Activated CD4-positive, alpha-beta memory T cell treated with anti-CD3 and anti-CD28 coated beads for 36 hours (primary cell): ENCODE measurements at regions of chr17 and their contacts with region 1.

Region 1: GRCh38 chr17:40113110-40113906 is 8.5 kb upstream of the MSL1 start:
- DNase-seq: peak; percentile 96
- H3K4me3 Mint-ChIP-seq: peak overlapping the region; percentile 80
- H3K27ac Mint-ChIP-seq: peak overlapping the region; percentile 92
- H3K4me1 Mint-ChIP-seq: peaks cover 49% of the 10 kb centered on the region
- H3K27me3 Mint-ChIP-seq: no peaks in the 10 kb centered on the region

Region 2: DNA sequence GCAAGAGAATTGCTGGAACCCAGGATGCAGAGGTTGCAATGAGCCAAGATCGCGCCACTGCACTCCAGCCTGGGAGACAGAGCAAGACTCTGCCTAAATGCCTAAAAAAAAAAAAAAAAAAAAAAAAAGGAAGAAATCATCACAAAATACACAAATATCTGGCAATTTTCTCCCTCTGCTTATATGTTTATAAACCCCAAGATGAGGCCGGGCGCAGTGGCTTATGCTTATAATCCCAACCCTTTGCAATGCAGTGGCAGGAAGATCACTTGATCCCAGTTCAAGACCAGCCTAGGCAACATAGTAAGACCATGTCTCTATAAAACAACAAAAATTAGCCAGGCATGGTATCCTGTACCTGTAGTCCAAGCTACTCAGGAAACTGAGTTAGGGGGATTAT is 683.7 kb before region 1 on chr17:
- CTCF ChIA-PET with region 1: no interaction called
- POLR2A ChIA-PET with region 1: no interaction called
- intact Hi-C with region 1: no loop called
- DNase-seq: no peak
- H3K4me3 Mint-ChIP-seq: no peak overlapping the region
- H3K27ac Mint-ChIP-seq: no peak overlapping the region
- H3K4me1 Mint-ChIP-seq: no peaks in the 10 kb centered on the region
- H3K27me3 Mint-ChIP-seq: no peaks in the 10 kb centered on the region

Region 3: GRCh38 chr17:40019140-40019991 is 93.9 kb before region 1 on chr17:
- CTCF ChIA-PET with region 1: interaction called, 41 read pairs
- POLR2A ChIA-PET with region 1: no interaction called
- intact Hi-C with region 1: no loop called
- DNase-seq: no peak
- H3K4me3 Mint-ChIP-seq: no peak overlapping the region
- H3K27ac Mint-ChIP-seq: no peak overlapping the region
- H3K4me1 Mint-ChIP-seq: no peaks in the 10 kb centered on the region
- H3K27me3 Mint-ChIP-seq: no peaks in the 10 kb centered on the region

Region 4: GRCh38 chr17:40068917-40069750 is 44.2 kb before region 1 on chr17:
- CTCF ChIA-PET with region 1: interaction called, 16 read pairs
- POLR2A ChIA-PET with region 1: interaction called, 5 read pairs
- intact Hi-C with region 1: loop called (anchors 2 kb)
- DNase-seq: peak; percentile 86
- H3K4me3 Mint-ChIP-seq: peak overlapping the region; percentile 78
- H3K27ac Mint-ChIP-seq: peak overlapping the region; percentile 95
- H3K4me1 Mint-ChIP-seq: peaks cover 56% of the 10 kb centered on the region
- H3K27me3 Mint-ChIP-seq: no peaks in the 10 kb centered on the region

Region 5: GRCh38 chr17:40098846-40099618 is 14.3 kb before region 1 on chr17:
- CTCF ChIA-PET with region 1: interaction called, 159 read pairs
- POLR2A ChIA-PET with region 1: interaction called, 29 read pairs
- intact Hi-C with region 1: loop called (anchors 1 kb)
- DNase-seq: peak; percentile 99
- H3K4me3 Mint-ChIP-seq: peak overlapping the region; percentile 88
- H3K27ac Mint-ChIP-seq: peak overlapping the region; percentile 91
- H3K4me1 Mint-ChIP-seq: peaks cover 85% of the 10 kb centered on the region
- H3K27me3 Mint-ChIP-seq: no peaks in the 10 kb centered on the region

Region 6: DNA sequence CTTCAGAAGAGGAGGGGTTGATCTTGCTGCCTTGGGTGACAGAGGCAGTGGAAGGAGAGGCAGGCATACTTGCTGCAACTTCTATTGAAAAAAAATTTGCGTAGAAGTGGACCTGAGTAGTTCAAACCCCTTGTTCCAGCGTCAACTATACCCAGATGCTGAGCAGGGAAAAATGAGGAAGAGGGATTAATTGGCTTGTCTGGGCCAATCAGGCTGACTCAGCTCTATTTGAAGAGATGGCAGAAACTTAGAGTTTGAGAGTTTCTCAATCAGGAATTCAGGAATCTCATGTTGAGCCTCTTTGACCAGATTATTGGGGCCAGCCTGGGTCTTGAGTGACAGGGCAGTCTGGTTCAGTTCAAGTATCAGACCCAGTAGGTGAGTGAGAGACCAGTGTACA is 44.7 kb after region 1 on chr17:
- CTCF ChIA-PET with region 1: interaction called, 31 read pairs
- POLR2A ChIA-PET with region 1: interaction called, 7 read pairs
- intact Hi-C with region 1: loop called (anchors 1 kb)
- DNase-seq: no peak
- H3K4me3 Mint-ChIP-seq: no peak overlapping the region
- H3K27ac Mint-ChIP-seq: peak overlapping the region; percentile 50
- H3K4me1 Mint-ChIP-seq: peaks cover 44% of the 10 kb centered on the region
- H3K27me3 Mint-ChIP-seq: no peaks in the 10 kb centered on the region

Region 7: GRCh38 chr17:40191237-40192208 is 78.2 kb after region 1 on chr17:
- CTCF ChIA-PET with region 1: interaction called, 99 read pairs
- POLR2A ChIA-PET with region 1: interaction called, 11 read pairs
- intact Hi-C with region 1: loop called (anchors 1 kb)
- DNase-seq: peak; percentile 80
- H3K4me3 Mint-ChIP-seq: peak overlapping the region; percentile 90
- H3K27ac Mint-ChIP-seq: no peak overlapping the region
- H3K4me1 Mint-ChIP-seq: peaks cover 8% of the 10 kb centered on the region
- H3K27me3 Mint-ChIP-seq: no peaks in the 10 kb centered on the region